Ascending aorta (tissue), 2 donors: ENCODE measurements at regions of chr12 and their contacts with region 1.

Region 1: DNA sequence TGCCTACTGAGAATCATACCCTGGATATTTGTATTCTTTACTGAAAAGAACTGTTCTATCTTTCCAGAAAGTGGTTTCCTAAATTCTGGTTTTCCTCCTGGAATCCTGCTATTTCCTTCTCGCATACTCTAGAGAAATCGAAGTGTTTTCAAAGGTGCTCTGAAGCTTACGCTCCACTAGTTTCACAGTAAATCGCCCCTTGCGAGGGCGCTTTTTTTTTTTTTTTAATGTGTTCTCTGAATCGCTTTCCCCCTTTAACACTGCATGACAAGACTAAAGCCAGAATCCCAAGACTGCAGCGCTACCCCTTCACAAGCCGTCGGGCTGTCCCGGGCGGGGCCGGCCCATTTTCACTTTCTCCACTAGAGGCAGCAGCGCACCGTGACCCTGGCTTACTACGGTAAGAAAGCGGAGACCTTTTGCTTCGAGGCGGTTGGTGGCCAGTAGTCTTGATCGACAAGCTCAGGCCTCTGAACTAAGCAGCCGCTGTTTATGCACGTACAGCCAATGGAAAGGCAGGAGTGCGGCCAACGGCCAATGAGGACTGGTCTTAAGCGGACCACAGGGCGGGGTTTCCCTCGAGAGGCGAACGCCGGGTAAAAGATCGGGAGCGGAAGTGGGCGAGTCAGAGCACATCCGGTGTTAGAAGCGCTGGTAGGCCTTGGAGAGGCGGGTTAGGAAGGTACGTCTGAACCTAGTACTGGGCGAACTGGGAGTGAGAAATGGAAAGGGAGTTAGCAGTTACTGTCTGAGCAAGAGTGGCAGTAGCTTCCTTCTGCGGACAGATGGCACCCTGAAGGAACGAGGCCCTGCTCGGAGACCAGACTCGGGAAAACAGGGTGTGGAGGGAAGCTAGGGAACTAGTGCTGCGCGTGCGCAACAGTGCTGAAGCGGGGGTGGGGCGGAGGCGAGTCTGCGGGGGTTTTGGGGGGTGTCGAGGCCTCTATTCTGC is at the start of gene TMBIM6:
- DNase-seq: peak; percentile 100
- H3K4me3 ChIP-seq: peak within 1 kb of the TSS; percentile 72
- H3K27ac ChIP-seq: peak within 1 kb of the TSS; percentile 97
- H3K4me1 ChIP-seq: peaks cover 5 to 21% of the 10 kb centered on the region in 2 donors
- H3K27me3 ChIP-seq: no peaks in the 10 kb centered on the region
- CTCF ChIP-seq: peak; percentile 86 to 94 (median 92)
- total RNA-seq, gene TMBIM6: 188 TPM

Region 2: GRCh38 chr12:49673446-49674317 is 67.5 kb before region 1 on chr12:
- intact Hi-C with region 1: loop called (anchors 2 kb)
- DNase-seq: peak; percentile 81 to 96
- H3K4me3 ChIP-seq: no peak overlapping the region
- H3K27ac ChIP-seq: peak overlapping the region; percentile 84 to 97
- H3K4me1 ChIP-seq: peaks cover 21 to 43% of the 10 kb centered on the region in 2 donors
- H3K27me3 ChIP-seq: no peaks in the 10 kb centered on the region
- CTCF ChIP-seq: peak; percentile 29 to 76 (median 35)

Region 3: GRCh38 chr12:49698619-49699545 is 42.3 kb before region 1 on chr12:
- intact Hi-C with region 1: no loop called
- DNase-seq: peak; percentile 13 to 78
- H3K4me3 ChIP-seq: peak overlapping the region in 1 of 2 donors; percentile 48
- H3K27ac ChIP-seq: peak overlapping the region; percentile 77 to 86
- H3K4me1 ChIP-seq: peaks cover 5 to 21% of the 10 kb centered on the region in 2 donors
- H3K27me3 ChIP-seq: no peaks in the 10 kb centered on the region
- CTCF ChIP-seq: no peak

Region 4: GRCh38 chr12:49828133-49829091 is 87.2 kb after region 1 on chr12 and contains the start of gene NCKAP5L:
- intact Hi-C with region 1: loop called (anchors 2 kb)
- DNase-seq: peak; percentile 88 to 99
- H3K4me3 ChIP-seq: peak within 1 kb of the TSS; percentile 99
- H3K27ac ChIP-seq: peak within 1 kb of the TSS; percentile 91 to 92
- H3K4me1 ChIP-seq: peaks cover 5 to 28% of the 10 kb centered on the region in 2 donors
- H3K27me3 ChIP-seq: no peaks in the 10 kb centered on the region
- CTCF ChIP-seq: no peak
- total RNA-seq, gene NCKAP5L: 33.4 TPM